B cell (primary cell): ENCODE measurements at regions of chr12 and their contacts with region 1.

Region 1: DNA sequence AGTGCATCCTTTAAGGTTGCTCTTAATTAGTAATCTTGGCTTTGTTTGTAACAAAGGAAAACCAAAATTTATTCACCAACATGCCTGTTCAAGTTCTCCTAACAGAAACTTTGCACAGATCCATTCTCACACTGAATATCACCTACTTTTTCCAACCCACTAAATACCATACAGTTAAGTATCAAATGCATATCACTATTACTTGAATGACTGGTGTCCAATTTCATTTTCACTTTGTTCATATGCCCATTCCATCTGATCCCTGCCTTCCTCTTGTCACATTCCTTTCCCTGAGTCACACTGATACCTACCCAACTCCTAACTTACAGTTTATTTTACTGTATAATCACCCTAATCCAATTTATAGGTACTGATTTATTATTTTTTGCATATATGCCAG is 286.4 kb downstream of the NELL2 start:
- DNase-seq: no peak
- ATAC-seq: no peak
- H3K4me3 ChIP-seq: no peak overlapping the region
- H3K4me3 Mint-ChIP-seq: no peak overlapping the region
- H3K27ac ChIP-seq: no peak overlapping the region
- H3K27ac Mint-ChIP-seq: no peak overlapping the region
- H3K4me1 ChIP-seq: no peaks in the 10 kb centered on the region
- H3K4me1 Mint-ChIP-seq: no peaks in the 10 kb centered on the region
- H3K27me3 ChIP-seq: no peaks in the 10 kb centered on the region
- H3K27me3 Mint-ChIP-seq: no peaks in the 10 kb centered on the region
- CTCF ChIP-seq: no peak

Region 2: GRCh38 chr12:43571885-43572284 is 1017.8 kb before region 1 on chr12:
- CTCF ChIA-PET with region 1: no interaction called
- POLR2A ChIA-PET with region 1: no interaction called
- intact Hi-C with region 1: no loop called
- DNase-seq: no peak
- ATAC-seq: no peak
- H3K4me3 ChIP-seq: no peak overlapping the region
- H3K4me3 Mint-ChIP-seq: no peak overlapping the region
- H3K27ac ChIP-seq: no peak overlapping the region
- H3K27ac Mint-ChIP-seq: no peak overlapping the region
- H3K4me1 ChIP-seq: no peaks in the 10 kb centered on the region
- H3K4me1 Mint-ChIP-seq: no peaks in the 10 kb centered on the region
- H3K27me3 ChIP-seq: no peaks in the 10 kb centered on the region
- H3K27me3 Mint-ChIP-seq: peaks cover 5% of the 10 kb centered on the region
- CTCF ChIP-seq: no peak

Region 3: GRCh38 chr12:44532940-44533339 is 56.8 kb before region 1 on chr12:
- CTCF ChIA-PET with region 1: no interaction called
- POLR2A ChIA-PET with region 1: no interaction called
- intact Hi-C with region 1: loop called (anchors 10 kb)
- DNase-seq: no peak
- ATAC-seq: no peak
- H3K4me3 ChIP-seq: no peak overlapping the region
- H3K4me3 Mint-ChIP-seq: no peak overlapping the region
- H3K27ac ChIP-seq: no peak overlapping the region
- H3K27ac Mint-ChIP-seq: no peak overlapping the region
- H3K4me1 ChIP-seq: no peaks in the 10 kb centered on the region
- H3K4me1 Mint-ChIP-seq: no peaks in the 10 kb centered on the region
- H3K27me3 ChIP-seq: no peaks in the 10 kb centered on the region
- H3K27me3 Mint-ChIP-seq: no peaks in the 10 kb centered on the region
- CTCF ChIP-seq: no peak